GM10248 (cell line): ENCODE measurements at regions of chr12 and their contacts with region 1.

Region 1: DNA sequence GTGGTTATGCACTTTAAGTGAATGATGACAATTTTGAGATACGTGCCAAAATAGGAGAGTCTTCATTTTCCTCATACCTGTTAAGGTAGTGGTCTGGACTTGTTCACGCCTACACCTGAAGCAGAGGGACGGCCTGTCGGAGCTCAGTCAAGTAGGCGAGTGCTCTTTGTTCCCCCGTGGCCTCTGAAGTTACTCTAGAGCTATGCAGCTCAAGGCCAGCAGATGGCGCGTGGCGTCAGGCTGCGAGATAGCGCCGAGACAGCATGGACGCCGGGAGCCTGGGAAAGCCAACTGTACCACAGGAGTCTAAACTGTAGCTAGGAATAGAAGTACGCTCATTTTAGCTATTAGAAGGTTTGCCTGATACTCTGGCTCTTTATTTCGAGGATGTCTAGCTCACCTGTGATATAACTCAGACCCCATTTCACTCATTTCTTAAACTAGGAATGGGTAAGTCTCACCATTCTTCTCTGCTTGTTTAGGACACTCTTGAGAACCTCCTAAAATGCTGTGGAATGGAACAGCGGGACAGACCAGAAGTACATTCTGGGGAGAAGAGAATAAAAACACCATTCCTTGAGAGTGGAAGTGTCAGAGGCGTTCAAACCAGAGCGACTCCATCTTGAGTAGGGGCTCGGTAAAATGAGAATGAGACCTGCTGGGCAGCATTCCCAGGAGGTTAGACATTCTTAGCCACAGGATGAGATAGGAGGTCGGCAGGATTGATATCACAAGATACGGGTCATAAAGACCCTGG is 267.4 kb upstream of the HMGA2 start:
- DNase-seq: peak; percentile 80
- CTCF ChIP-seq: peak; percentile 98

Region 2: DNA sequence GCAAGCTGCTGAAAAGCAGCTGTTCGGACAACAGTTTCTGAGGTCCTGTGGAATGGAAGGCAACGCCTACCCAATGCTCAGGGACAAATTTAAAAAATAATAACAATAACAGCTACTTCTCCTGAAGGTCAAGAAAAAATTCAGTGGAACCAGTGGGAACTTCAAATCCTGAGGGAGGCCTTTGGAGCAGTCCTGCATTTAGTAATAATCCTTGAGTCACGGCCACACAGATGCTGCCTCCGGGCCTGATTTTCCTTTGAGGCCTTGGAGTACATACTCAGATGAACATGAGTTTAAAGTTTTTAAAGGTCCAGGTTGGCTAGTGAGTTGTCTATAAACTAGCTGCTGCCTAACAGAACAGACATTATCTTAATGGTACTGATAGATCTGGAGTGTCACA is 10.3 kb before region 1 on chr12:
- CTCF ChIA-PET with region 1: interaction called, 25 read pairs
- POLR2A ChIA-PET with region 1: no interaction called
- DNase-seq: no peak
- CTCF ChIP-seq: no peak

Region 3: GRCh38 chr12:66087365-66087943 is 530.6 kb after region 1 on chr12:
- CTCF ChIA-PET with region 1: interaction called, 11 read pairs
- POLR2A ChIA-PET with region 1: no interaction called
- DNase-seq: peak; percentile 52
- CTCF ChIP-seq: peak; percentile 67

Region 4: DNA sequence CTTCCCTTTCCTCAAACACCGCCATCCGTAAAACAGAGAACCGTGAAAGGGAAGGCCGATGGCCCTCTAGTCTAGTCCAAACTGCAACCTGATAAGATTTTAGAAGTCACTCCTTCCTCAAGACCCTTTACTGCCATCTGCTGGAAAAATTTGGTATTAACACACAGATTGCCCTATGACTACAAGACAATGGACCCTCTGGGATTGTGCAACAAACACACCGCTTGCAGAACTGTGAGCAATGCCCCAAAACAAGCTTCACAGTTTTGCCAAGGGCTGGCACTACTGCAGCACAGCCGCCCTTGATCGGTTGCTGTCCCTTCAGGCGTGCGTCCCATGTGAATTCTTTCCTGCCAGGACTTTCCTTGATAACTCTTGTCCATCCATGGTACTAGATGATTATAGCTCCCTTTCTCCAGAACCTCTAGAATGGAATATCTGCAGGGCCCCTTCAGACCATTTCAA is 550.6 kb after region 1 on chr12:
- CTCF ChIA-PET with region 1: interaction called, 18 read pairs
- POLR2A ChIA-PET with region 1: no interaction called
- DNase-seq: peak; percentile 71
- CTCF ChIP-seq: peak; percentile 59